ENCODE measurements at regions of chr3 and their contacts with region 1.

Region 1: DNA sequence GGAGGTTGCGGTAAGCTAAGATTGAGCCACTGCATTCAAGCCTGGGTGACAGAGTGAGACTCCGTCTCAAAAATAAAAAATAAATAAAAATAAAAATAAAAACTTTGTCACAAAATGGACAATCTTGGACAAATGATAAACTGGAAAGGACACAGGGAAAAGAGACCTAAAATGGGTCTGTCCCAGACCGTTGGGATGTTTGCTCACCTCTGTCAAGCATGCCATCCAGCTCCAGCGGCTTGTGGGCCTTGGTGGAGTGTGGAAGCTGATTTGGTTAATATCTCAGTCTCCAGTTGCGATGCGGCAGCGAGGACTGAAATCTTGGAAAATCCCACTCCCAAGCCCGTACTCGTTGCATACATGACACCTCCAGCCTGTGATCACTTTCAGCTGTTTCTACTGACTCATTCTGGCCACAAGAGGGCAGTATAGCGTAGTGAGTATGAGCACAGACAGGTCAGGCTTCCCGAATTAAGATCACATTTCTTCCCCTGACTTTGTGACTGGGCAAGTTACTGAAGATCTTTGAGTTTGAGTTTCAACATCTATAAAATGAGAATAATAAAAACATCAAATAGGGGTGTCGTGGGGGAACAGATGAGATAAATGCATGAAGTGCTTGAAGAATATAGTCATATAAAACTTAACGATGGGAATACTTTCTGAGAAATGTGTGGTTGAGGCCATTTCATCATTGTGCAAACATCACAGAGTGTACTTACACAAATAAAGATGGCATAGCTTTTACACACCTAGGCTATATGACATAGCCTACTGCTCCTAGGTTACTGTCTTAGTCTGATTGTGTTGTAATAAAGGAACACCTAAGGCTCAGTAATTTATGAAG is 19.6 kb upstream of the MOBP start:
- DNase-seq: peak; percentile 72
- ATAC-seq: peak; percentile 86
- H3K4me3 Mint-ChIP-seq: no peak overlapping the region
- H3K27ac Mint-ChIP-seq: no peak overlapping the region
- H3K4me1 Mint-ChIP-seq: no peaks in the 10 kb centered on the region
- H3K27me3 Mint-ChIP-seq: peaks cover 3% of the 10 kb centered on the region

Region 2: DNA sequence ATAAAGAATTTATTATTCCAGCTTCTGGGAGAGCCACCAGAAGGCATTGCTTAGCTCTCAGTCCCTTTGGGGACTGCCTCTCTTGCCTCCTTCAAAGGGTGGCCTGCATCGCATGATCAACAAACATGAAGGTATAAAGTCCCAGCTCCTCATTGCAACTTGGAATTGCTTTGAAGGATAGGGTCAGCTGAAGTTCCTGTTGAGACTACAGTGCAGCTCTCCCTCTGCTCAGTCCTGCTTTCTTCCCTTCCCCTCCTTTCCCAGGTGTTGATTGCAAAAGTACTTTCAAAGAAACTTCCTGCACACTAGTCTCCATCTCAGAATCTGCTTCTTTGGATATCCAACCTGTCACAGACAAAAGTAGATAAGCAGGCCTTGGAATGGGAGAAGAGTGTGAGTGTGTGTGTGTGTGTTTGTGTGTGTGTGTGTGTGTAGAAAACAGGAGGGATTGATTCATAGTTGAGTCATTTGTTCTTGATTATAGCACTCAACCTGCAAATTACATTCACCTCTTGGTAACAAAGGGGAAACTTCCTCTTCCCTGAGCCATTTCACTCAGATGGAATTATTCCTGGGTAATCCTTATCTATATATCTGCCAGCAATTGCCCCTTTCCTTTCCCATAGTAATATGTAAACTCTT is 104.7 kb before region 1 on chr3:
- CTCF ChIA-PET with region 1: no interaction called
- POLR2A ChIA-PET with region 1: no interaction called
- intact Hi-C with region 1: no loop called
- DNase-seq: no peak
- ATAC-seq: peak; percentile 33
- H3K4me3 Mint-ChIP-seq: no peak overlapping the region
- H3K27ac Mint-ChIP-seq: no peak overlapping the region
- H3K4me1 Mint-ChIP-seq: peaks cover 33% of the 10 kb centered on the region
- H3K27me3 Mint-ChIP-seq: no peaks in the 10 kb centered on the region

Region 3: DNA sequence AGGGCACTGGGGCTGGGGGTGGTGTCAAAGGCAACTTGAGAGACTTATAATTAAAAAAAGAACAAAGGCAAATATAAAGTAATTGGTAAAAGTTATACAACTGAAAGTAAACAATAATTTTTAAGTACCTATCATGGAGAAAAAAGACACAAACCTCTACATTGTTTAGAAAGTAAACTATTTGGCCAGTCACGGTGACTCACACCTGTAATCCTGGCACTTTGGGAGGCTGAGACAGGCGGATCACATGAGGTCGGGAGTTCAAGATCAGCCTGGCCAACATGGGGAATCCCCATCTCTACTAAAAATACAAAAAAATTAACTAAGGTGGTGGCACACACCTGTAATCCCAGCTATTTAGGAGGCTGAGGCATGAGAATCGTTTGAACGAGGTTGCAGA is 15.5 kb before region 1 on chr3:
- CTCF ChIA-PET with region 1: interaction called, 10 read pairs
- POLR2A ChIA-PET with region 1: no interaction called
- intact Hi-C with region 1: no loop called
- DNase-seq: no peak
- ATAC-seq: no peak
- H3K4me3 Mint-ChIP-seq: no peak overlapping the region
- H3K27ac Mint-ChIP-seq: no peak overlapping the region
- H3K4me1 Mint-ChIP-seq: no peaks in the 10 kb centered on the region
- H3K27me3 Mint-ChIP-seq: peaks cover 4% of the 10 kb centered on the region

Region 4: GRCh38 chr3:39473452-39474127 is 25.7 kb after region 1 on chr3:
- CTCF ChIA-PET with region 1: interaction called, 13 read pairs
- POLR2A ChIA-PET with region 1: no interaction called
- intact Hi-C with region 1: no loop called
- DNase-seq: no peak
- ATAC-seq: no peak
- H3K4me3 Mint-ChIP-seq: no peak overlapping the region
- H3K27ac Mint-ChIP-seq: no peak overlapping the region
- H3K4me1 Mint-ChIP-seq: no peaks in the 10 kb centered on the region
- H3K27me3 Mint-ChIP-seq: peaks cover 17% of the 10 kb centered on the region

Region 5: GRCh38 chr3:39499651-39500240 is 51.9 kb after region 1 on chr3:
- CTCF ChIA-PET with region 1: interaction called, 42 read pairs
- POLR2A ChIA-PET with region 1: no interaction called
- intact Hi-C with region 1: loop called (anchors 1 kb)
- DNase-seq: no peak
- ATAC-seq: no peak
- H3K4me3 Mint-ChIP-seq: no peak overlapping the region
- H3K27ac Mint-ChIP-seq: no peak overlapping the region
- H3K4me1 Mint-ChIP-seq: peaks cover 2% of the 10 kb centered on the region
- H3K27me3 Mint-ChIP-seq: peaks cover 27% of the 10 kb centered on the region

Measured in activated CD4-positive, alpha-beta T cell treated with anti-CD3 and anti-CD28 coated beads for 36 hours (primary cell).